Activated CD4-positive, alpha-beta memory T cell treated with anti-CD3 and anti-CD28 coated beads, Interleukin-2, amount 10 ng/mL, durations not matched to agents 7 days and 5 days (primary cell): ENCODE measurements at regions of chr11 and their contacts with region 1.

Region 1: GRCh38 chr11:64269380-64270234 is 14.9 kb downstream of the BAD start:
- DNase-seq: peak; percentile 98
- H3K4me3 Mint-ChIP-seq: peak overlapping the region; percentile 85
- H3K27ac Mint-ChIP-seq: peak overlapping the region; percentile 89
- H3K4me1 Mint-ChIP-seq: peaks cover 30% of the 10 kb centered on the region
- H3K27me3 Mint-ChIP-seq: no peaks in the 10 kb centered on the region

Region 2: DNA sequence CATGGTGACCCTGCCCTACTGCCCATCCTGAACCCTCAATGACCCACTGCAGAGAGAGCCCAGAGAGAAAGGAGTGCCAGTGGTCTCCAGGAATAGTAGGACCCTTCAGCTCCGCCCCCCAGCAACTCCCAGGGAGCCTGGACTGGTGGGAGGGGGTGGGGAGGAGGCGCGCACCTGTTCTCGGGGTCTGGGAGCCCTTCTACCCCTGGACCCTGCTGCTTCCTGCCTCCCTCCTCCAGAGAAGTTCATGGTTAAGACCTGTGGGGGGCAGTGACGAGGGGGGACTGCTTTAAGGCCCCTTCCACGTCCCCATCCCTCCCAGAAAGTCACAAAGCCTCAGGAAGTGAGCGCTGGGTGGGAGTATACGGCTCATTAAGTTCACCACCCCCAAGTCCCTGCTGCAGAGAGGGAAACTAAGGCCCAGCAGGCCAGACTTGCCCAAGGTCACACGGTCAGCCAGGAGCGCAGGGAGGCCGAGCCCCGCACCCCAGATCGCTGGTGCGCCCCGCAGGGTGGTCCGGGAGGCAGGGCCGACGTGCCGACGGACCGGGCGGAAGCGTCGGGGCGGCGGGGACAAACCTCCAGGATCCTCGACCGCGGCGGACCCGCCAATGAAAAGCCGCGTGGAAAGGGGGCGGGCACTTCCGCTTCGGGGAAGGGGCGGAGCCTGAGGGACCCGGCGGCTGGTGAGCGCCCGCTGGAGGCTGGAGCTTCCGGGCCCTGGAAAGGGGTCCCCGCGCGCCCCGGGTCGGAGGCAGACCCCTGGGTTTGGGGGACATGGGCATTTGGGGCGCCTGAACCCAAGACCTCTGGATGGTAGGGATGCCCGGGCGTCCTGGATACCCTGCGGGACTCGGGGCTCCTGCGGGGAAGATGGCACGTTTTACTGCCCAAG is 43.7 kb before region 1 on chr11 and contains the starts of genes NUDT22 and TRPT1:
- CTCF ChIA-PET with region 1: no interaction called
- POLR2A ChIA-PET with region 1: interaction called, 37 read pairs
- DNase-seq: peak; percentile 94
- H3K4me3 Mint-ChIP-seq: peak within 1 kb of the TSS; percentile 88
- H3K27ac Mint-ChIP-seq: peak within 1 kb of the TSS; percentile 79
- H3K4me1 Mint-ChIP-seq: peaks cover 40% of the 10 kb centered on the region
- H3K27me3 Mint-ChIP-seq: no peaks in the 10 kb centered on the region
- total RNA-seq, gene NUDT22: 84.8 to 90.6 TPM
- total RNA-seq, gene TRPT1: 34.7 to 35.3 TPM

Region 3: DNA sequence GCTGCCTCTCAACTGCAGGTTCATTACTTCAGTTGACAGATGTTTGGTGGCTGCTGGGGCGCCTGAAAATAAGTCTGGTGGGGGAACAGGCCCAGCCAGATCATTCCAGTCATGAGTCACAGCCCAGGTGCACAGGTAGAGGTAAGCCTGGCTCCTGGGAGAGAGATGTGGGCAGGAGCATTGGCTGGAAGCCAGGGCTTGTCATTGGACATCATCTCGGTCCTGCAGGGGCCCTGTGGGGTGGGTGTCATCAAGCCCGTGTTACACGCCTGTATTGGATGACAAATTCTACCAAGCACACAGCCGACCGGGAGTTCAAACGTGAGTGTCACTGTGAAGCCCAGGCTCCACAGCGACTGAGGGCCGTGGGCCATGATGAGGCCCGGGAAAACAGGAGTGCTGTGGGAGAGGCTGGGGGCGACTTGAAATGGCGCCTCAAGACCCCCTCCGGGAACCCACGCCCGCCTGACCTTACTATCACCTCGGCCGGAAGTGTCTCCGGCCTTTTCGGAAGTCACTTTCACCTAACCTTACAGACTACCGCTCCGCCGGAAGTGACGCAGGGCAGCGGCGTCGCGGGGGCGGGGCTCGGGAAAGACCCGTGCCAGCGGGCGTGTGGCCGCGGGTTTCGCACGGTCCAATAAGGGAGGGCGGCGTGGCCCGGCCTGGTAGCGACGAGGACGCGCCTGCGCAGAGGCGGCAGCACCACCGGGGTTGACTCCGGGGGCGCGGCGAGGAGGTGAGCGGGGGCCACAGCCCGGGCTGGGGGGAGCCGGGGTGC is 29.0 kb before region 1 on chr11 and contains the start of gene FKBP2:
- CTCF ChIA-PET with region 1: interaction called, 6 read pairs
- POLR2A ChIA-PET with region 1: interaction called, 131 read pairs
- DNase-seq: peak; percentile 98
- H3K4me3 Mint-ChIP-seq: peak within 1 kb of the TSS; percentile 90
- H3K27ac Mint-ChIP-seq: peak within 1 kb of the TSS; percentile 92
- H3K4me1 Mint-ChIP-seq: peaks cover 52% of the 10 kb centered on the region
- H3K27me3 Mint-ChIP-seq: no peaks in the 10 kb centered on the region
- total RNA-seq, gene FKBP2: 26.4 to 27.9 TPM

Region 4: GRCh38 chr11:64246871-64247728 is 22.5 kb before region 1 on chr11 and contains the start of gene PPP1R14B:
- CTCF ChIA-PET with region 1: interaction called, 24 read pairs
- POLR2A ChIA-PET with region 1: interaction called, 131 read pairs
- DNase-seq: peak; percentile 84
- H3K4me3 Mint-ChIP-seq: peak within 1 kb of the TSS; percentile 86
- H3K27ac Mint-ChIP-seq: peak within 1 kb of the TSS; percentile 85
- H3K4me1 Mint-ChIP-seq: peaks cover 53% of the 10 kb centered on the region
- H3K27me3 Mint-ChIP-seq: peaks cover 3% of the 10 kb centered on the region
- total RNA-seq, gene PPP1R14B: 96.9 to 105 TPM

Region 5: GRCh38 chr11:64284048-64284961 is 14.7 kb after region 1 on chr11 and contains the start of gene BAD:
- CTCF ChIA-PET with region 1: interaction called, 36 read pairs
- POLR2A ChIA-PET with region 1: interaction called, 161 read pairs
- DNase-seq: peak; percentile 95
- H3K4me3 Mint-ChIP-seq: peak within 1 kb of the TSS; percentile 83
- H3K27ac Mint-ChIP-seq: peak within 1 kb of the TSS; percentile 82
- H3K4me1 Mint-ChIP-seq: peaks cover 28% of the 10 kb centered on the region
- H3K27me3 Mint-ChIP-seq: no peaks in the 10 kb centered on the region
- total RNA-seq, gene BAD: 36.5 to 39.2 TPM

Region 6: DNA sequence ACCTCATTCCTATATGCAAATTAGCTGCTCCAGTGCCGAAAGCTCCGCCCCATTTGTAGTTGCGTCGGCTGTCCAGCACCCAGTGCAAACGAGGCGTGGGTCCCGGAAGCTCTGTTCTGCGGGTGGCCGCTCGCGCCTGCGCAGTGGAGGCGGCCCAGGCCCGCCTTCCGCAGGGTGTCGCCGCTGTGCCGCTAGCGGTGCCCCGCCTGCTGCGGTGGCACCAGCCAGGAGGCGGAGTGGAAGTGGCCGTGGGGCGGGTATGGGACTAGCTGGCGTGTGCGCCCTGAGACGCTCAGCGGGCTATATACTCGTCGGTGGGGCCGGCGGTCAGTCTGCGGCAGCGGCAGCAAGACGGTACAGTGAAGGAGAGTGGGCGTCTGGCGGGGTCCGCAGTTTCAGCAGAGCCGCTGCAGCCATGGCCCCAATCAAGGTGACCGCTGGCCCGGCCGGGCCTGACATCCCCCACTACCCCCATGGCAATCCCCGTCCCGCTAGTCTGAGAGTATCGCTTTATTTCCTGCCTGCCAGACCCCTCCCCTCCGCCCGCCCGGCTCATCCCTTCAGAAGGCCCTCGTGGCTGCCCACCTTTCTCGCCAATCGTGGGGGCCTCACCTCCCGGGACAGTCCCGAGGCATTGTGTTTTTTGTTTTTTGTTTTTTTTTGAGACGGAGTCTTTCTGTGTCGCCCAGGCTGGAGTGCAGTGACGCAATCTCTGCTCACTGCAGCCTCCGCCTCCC is 48.5 kb after region 1 on chr11 and contains the start of gene PRDX5:
- CTCF ChIA-PET with region 1: interaction called, 17 read pairs
- POLR2A ChIA-PET with region 1: interaction called, 26 read pairs
- DNase-seq: peak; percentile 96
- H3K4me3 Mint-ChIP-seq: peak within 1 kb of the TSS; percentile 91
- H3K27ac Mint-ChIP-seq: peak within 1 kb of the TSS; percentile 96
- H3K4me1 Mint-ChIP-seq: peaks cover 53% of the 10 kb centered on the region
- H3K27me3 Mint-ChIP-seq: no peaks in the 10 kb centered on the region
- total RNA-seq, gene PRDX5: 137 to 139 TPM

Region 7: GRCh38 chr11:64331557-64332371 is 62.2 kb after region 1 on chr11:
- CTCF ChIA-PET with region 1: interaction called, 11 read pairs
- POLR2A ChIA-PET with region 1: interaction called, 3 read pairs
- DNase-seq: peak; percentile 89
- H3K4me3 Mint-ChIP-seq: peak overlapping the region; percentile 45
- H3K27ac Mint-ChIP-seq: peak overlapping the region; percentile 83
- H3K4me1 Mint-ChIP-seq: peaks cover 44% of the 10 kb centered on the region
- H3K27me3 Mint-ChIP-seq: no peaks in the 10 kb centered on the region

Region 8: DNA sequence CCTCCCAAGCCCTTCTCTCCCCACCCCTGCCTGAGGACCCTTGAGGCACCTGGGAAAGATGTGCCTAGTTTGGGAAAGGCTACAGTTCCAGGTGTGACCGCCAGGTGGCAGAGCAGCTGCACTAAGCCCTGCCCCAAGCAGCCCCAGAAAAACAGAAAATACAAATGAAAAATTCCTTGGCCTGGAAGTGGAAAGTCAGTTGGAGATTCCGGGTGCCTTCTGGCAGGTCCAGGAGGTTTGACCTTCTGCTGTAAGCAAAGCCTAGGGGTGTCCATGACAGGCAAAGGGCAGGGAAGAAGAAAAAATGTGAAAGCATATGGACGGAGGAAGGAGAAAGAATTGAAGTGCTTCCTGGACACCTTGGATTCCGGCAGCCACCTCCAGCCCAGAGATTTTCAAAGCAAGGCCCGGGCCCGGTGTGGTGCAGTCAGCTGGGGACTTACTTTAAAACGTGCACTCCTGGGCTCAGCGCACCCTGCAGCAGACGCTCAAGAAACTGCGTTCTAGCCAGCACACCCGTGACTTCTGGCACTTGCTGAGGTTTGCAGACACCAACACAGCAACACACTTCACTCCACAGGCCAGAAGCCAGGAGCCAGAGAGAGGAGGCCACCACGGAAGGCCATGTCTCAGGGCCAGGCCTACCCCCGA is 284.1 kb after region 1 on chr11:
- CTCF ChIA-PET with region 1: no interaction called
- POLR2A ChIA-PET with region 1: no interaction called
- DNase-seq: peak; percentile 47
- H3K4me3 Mint-ChIP-seq: no peak overlapping the region
- H3K27ac Mint-ChIP-seq: no peak overlapping the region
- H3K4me1 Mint-ChIP-seq: no peaks in the 10 kb centered on the region
- H3K27me3 Mint-ChIP-seq: peaks cover 6% of the 10 kb centered on the region